SK-N-SH (cell line): ENCODE measurements at regions of chr5 and their contacts with region 1.

Region 1: DNA sequence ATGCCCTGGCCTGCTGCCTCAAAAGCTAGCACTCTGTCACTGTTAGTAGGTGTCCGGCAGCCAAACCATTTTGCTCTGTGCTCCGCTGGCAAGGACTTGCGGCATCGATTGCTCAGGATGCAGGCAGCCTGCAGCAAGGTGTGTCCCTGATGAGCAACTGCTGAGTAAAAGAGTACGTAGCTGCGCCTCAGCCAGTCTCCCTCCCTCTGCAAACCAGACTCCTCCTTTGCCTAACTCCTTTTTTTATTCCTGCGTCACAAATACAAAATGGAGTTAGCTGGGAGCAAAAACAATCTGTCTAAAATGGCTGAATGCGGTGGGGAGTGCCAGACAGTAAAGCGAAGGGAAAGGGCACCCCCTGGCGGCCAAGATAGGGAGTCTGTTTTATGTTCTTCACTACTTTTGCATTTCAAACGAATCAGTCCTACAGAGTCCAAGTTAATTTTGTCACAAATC is 61.1 kb downstream of the DIAPH1 start:
- DNase-seq: peak; percentile 69
- H3K4me3 ChIP-seq: peak overlapping the region; percentile 34 to 39; a peak in 3 of 4 replicates
- H3K27ac ChIP-seq: peak overlapping the region; percentile 91 to 100
- H3K4me1 ChIP-seq: peaks cover 21 to 23% of the 10 kb centered on the region in 2 experiments; a peak in 3 of 4 replicates
- H3K27me3 ChIP-seq: no peaks in the 10 kb centered on the region
- CTCF ChIP-seq: peak; percentile 93
- EP300 ChIP-seq: peak; percentile 28 to 48; a peak in 3 of 4 replicates
- RAD21 ChIP-seq: peak; percentile 96

Region 2: GRCh38 chr5:141186897-141187512 is 370.7 kb before region 1 on chr5 and contains the start of gene PCDHB9:
- CTCF ChIA-PET with region 1: interaction called, 27 read pairs
- POLR2A ChIA-PET with region 1: interaction called, 7 read pairs
- DNase-seq: peak; percentile 61
- H3K4me3 ChIP-seq: peak within 1 kb of the TSS; percentile 45 to 59
- H3K27ac ChIP-seq: no peak within 1 kb of the TSS; a peak in 1 of 4 replicates
- H3K4me1 ChIP-seq: no peaks in the 10 kb centered on the region
- H3K27me3 ChIP-seq: no peaks in the 10 kb centered on the region
- CTCF ChIP-seq: peak; percentile 71
- EP300 ChIP-seq: no peak
- RAD21 ChIP-seq: peak; percentile 59
- polyA plus RNA-seq, gene PCDHB9: 1.4 and 2.4 TPM in 2 replicates

Region 3: GRCh38 chr5:141303756-141304155 is 254.0 kb before region 1 on chr5 and contains the start of gene SLC25A2:
- CTCF ChIA-PET with region 1: no interaction called
- POLR2A ChIA-PET with region 1: no interaction called
- DNase-seq: no peak
- H3K4me3 ChIP-seq: no peak within 1 kb of the TSS; a peak in 1 of 4 replicates
- H3K27ac ChIP-seq: no peak within 1 kb of the TSS
- H3K4me1 ChIP-seq: no peaks in the 10 kb centered on the region
- H3K27me3 ChIP-seq: no peaks in the 10 kb centered on the region
- CTCF ChIP-seq: no peak
- EP300 ChIP-seq: no peak
- RAD21 ChIP-seq: no peak
- polyA plus RNA-seq, gene SLC25A2: not detected in 2 replicates

Region 4: DNA sequence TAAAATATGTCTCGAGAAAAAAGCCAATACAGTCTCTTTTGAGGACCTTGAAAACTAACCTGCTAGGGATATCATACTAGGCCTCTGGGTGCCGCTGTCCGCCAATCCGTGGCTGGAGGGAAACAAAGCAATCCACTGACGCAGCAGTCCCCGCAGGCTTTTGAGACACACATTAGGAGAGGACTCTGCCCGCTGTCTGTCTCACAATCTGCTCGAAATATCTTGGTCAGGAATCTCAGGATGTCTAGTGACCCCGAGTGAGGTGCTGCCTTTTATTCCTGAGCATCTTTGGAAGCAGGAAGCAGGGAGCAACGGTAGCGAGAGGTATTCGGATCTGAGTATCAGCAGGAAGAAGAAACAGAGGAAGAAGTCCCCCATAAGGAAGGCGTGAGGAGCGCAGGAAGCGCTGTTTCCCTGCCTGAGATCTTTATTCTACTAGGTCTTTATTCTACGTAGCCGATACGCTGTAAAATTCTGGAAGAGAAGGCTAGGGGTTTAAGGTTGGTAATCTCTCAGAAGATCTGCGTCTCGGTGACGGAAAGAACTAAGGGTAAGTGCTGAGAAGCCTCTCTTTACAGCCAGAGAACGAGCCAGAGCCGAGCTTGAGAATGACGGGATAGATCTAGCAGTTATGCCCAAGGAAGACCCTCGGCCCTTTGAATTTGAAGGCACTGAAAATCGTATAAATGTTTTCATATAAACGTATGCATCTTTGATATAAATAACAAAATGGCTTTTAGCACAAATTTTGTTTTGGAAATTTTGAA is 231.4 kb before region 1 on chr5:
- CTCF ChIA-PET with region 1: interaction called, 36 read pairs
- POLR2A ChIA-PET with region 1: no interaction called
- DNase-seq: peak; percentile 74
- H3K4me3 ChIP-seq: peak overlapping the region; percentile 46 to 58
- H3K27ac ChIP-seq: peak overlapping the region; percentile 16 to 67; a peak in 3 of 4 replicates
- H3K4me1 ChIP-seq: no peaks in the 10 kb centered on the region; a peak in 1 of 4 replicates
- H3K27me3 ChIP-seq: no peaks in the 10 kb centered on the region
- CTCF ChIP-seq: peak; percentile 56
- EP300 ChIP-seq: no peak
- RAD21 ChIP-seq: peak; percentile 65

Region 5: DNA sequence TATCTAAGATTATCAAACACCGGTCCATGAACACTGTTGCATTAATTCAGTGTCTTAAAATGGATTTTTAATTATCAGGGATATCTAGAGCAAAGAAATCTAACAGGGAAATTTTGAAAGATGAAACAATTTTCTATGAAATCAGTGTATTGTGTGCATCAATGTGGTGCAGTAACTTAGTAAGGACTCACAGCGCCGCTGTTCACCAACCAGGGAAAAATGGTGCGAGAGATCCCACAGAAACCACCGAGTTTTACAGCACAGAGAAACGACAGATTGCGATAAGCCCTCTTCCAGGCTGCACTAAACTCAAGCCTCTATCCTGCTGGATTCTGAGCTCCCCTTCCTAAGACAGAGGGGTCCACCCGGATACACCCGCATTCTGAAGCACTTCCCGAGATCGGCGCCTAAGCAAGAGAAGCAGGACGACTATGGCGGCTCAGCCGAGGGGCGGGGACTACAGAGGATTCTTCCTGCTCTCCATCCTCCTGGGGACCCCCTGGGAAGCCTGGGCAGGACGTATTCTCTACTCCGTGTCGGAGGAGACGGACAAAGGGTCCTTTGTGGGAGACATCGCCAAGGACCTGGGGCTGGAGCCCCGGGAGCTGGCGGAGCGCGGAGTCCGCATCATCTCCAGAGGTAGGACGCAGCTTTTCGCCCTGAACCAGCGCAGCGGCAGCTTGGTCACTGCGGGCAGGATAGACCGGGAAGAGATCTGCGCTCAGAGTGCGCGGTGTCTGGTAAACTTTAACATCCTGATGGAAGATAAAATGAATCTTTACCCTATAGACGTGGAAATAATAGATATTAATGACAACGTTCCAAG is 175.0 kb before region 1 on chr5 and contains the start of gene PCDHGA7:
- CTCF ChIA-PET with region 1: interaction called, 16 read pairs
- POLR2A ChIA-PET with region 1: interaction called, 6 read pairs
- DNase-seq: peak; percentile 70
- H3K4me3 ChIP-seq: peak within 1 kb of the TSS; percentile 53 to 62
- H3K27ac ChIP-seq: peak within 1 kb of the TSS; percentile 55 to 83
- H3K4me1 ChIP-seq: no peaks in the 10 kb centered on the region; a peak in 1 of 4 replicates
- H3K27me3 ChIP-seq: no peaks in the 10 kb centered on the region
- CTCF ChIP-seq: peak; percentile 65
- EP300 ChIP-seq: no peak
- RAD21 ChIP-seq: peak; percentile 83
- polyA plus RNA-seq, gene PCDHGA7: 3.4 and 7.8 TPM in 2 replicates

Region 6: GRCh38 chr5:141475625-141476131 is 82.0 kb before region 1 on chr5 and contains the start of gene PCDHGC3:
- CTCF ChIA-PET with region 1: interaction called, 80 read pairs
- POLR2A ChIA-PET with region 1: interaction called, 12 read pairs
- DNase-seq: peak; percentile 90
- H3K4me3 ChIP-seq: peak within 1 kb of the TSS; percentile 82 to 85
- H3K27ac ChIP-seq: peak within 1 kb of the TSS; percentile 92 to 94
- H3K4me1 ChIP-seq: peaks cover 6 to 34% of the 10 kb centered on the region in 2 experiments; a peak in 3 of 4 replicates
- H3K27me3 ChIP-seq: no peaks in the 10 kb centered on the region
- CTCF ChIP-seq: peak; percentile 45
- EP300 ChIP-seq: peak in 1 of 2 experiments; percentile 38; a peak in 1 of 4 replicates
- RAD21 ChIP-seq: peak; percentile 85
- polyA plus RNA-seq, gene PCDHGC3: 55.8 and 97.0 TPM in 2 replicates

Region 7: DNA sequence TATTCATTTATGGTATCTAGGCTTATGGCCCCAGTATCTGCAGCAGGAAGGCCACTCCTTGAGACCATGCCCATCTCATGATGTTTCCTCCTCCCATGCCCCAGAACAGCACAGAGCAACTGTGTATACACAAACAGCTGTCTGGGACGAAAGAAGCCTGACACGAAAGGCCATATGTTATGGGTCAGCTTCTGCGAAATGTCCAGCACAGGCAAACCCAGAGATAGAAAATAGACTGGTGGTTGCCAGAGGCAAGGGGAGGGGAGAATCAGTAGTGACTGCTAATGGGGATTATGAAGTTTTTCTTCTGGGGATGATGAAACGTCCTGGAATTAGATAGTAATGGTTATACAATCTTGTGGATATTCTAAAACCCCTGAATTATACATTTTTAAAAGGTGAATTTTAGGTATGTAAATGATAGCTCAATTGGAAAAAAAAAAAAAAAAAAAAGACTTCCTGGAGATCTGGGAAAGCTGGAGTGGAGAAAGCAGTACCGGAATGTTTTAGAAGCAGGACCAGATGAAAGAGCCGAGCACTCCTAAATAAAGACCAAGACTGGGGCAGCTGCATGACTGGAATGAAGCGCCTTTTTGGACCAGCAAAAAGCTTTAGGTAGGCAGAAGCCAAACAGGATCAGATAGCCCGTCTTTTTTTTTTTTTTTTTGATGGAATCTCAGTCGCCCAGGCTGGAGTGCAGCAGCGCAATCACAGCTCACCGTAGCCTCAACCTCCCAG is 39.7 kb before region 1 on chr5:
- CTCF ChIA-PET with region 1: interaction called, 191 read pairs
- POLR2A ChIA-PET with region 1: interaction called, 16 read pairs
- DNase-seq: peak; percentile 62
- H3K4me3 ChIP-seq: no peak overlapping the region
- H3K27ac ChIP-seq: peak overlapping the region; percentile 99 to 100
- H3K4me1 ChIP-seq: peaks cover 59 to 78% of the 10 kb centered on the region in 2 experiments
- H3K27me3 ChIP-seq: no peaks in the 10 kb centered on the region
- CTCF ChIP-seq: no peak
- EP300 ChIP-seq: peak in 1 of 2 experiments; percentile 81; a peak in 2 of 4 replicates
- RAD21 ChIP-seq: peak; percentile 0; the same call in 1 of the 2 replicates

Region 8: DNA sequence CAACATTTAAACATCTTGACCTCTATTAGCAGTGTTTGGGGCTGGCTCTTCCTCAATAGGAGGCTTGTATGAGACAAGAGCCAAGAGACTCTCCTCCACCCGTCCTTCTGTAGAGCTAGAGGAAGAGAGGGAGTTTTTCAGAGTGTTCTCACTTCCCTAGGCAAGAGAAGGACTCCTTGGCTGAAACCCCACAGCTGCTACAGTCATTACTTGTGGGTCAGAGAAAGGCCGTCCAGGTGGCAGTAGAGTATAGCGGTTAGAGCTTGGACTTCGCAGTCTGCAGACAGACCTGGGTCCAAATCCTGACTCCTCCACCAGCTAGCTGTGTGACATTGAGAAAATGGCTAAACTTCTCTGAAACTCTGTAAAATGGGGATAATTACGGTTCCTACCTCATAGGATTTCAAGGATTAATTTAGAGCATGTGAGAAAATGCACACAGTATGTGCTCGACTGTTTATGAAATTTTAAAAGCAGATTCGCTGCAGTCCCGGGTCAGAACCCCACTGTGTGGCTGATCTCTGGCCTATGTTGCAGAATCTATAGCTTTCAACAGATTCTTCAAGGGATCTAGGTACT is 205.2 kb after region 1 on chr5:
- CTCF ChIA-PET with region 1: no interaction called
- POLR2A ChIA-PET with region 1: no interaction called
- DNase-seq: no peak
- H3K4me3 ChIP-seq: no peak overlapping the region
- H3K27ac ChIP-seq: no peak overlapping the region
- H3K4me1 ChIP-seq: peaks cover 0 to 6% of the 10 kb centered on the region in 2 experiments; a peak in 1 of 4 replicates
- H3K27me3 ChIP-seq: peaks cover 9% of the 10 kb centered on the region
- CTCF ChIP-seq: no peak
- EP300 ChIP-seq: no peak
- RAD21 ChIP-seq: no peak